Activated naive CD4-positive, alpha-beta T cell treated with anti-CD3 and anti-CD28 coated beads for 36 hours (primary cell): ENCODE measurements at regions of chr1 and their contacts with region 1.

Region 1: DNA sequence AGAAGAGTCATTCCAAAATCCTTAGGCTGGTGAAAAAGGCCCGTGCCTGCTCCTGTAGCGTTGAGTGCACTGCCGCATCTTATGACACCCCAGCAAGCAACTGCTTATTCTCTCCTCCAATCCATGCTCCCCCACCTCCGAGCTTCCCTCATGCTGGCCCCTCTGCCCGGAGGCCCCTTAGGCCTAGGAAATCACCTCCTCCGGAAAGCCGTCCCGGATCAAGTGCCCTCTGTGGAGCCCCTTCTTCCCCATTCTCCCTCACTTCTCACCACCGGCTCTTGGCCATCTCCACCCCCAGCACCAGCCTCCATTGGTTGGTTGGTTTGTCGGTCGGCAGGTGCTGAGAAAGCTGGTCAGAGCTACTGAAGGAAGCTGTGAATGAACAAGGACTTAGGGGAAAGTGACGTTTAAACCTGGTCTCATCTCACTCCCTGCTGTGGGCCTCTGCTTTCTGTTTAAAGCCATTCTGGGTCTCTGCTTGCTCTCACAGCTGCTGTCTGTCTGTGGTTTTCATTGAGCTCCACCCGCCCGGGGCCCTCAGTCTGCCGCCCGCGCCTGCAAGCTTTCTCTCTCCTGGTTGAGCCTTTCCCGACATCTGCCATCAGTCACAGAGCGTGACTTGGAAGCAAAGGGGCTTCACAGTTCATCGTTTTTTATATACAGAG is 122.2 kb downstream of the KCNN3 start:
- DNase-seq: peak; percentile 80
- H3K4me3 Mint-ChIP-seq: peak overlapping the region; percentile 80
- H3K27ac Mint-ChIP-seq: peak overlapping the region; percentile 96
- H3K4me1 Mint-ChIP-seq: peaks cover 80% of the 10 kb centered on the region
- H3K27me3 Mint-ChIP-seq: no peaks in the 10 kb centered on the region

Region 2: DNA sequence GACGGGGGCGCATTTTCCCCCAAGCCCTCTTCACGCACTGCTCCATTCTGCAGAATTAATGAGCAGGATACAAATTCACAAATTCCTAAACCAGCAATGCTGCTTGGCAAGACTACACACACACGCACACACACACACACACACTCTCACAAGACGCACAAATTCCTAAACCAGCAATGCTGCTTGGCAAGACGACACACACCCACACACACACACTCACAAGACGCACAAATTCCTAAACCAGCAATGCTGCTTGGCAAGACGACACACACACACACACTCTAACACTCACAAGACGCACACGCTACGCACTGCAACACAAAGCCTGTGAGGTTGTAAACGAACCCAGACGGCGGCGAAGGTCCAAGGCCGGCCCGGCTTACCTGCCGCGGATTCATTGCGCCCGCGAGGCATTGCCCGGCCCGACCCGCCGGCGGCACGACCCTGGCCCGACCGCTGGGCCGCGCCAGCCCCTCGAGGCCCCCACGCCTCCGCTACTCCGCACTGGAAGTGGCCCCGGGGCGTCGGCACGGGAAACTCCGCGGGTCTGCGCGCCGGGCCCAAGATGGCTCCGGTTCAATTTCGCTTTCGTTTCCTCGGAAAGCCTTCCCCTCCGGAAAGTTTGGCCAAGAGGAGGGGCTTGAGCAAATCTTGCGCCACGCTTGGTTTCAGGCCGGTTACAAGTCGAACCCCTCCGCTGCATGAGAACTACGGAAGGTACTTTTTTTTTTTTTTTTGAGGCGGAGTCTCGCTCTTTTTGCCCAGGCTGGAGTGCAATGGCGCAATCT is 140.1 kb before region 1 on chr1 and contains the start of gene ADAR:
- CTCF ChIA-PET with region 1: interaction called, 3 read pairs
- intact Hi-C with region 1: loop called (anchors 2 kb)
- DNase-seq: peak; percentile 97
- H3K4me3 Mint-ChIP-seq: peak within 1 kb of the TSS; percentile 91
- H3K27ac Mint-ChIP-seq: peak within 1 kb of the TSS; percentile 96
- H3K4me1 Mint-ChIP-seq: peaks cover 75% of the 10 kb centered on the region
- H3K27me3 Mint-ChIP-seq: no peaks in the 10 kb centered on the region
- total RNA-seq, gene ADAR: 301 to 313 TPM

Region 3: DNA sequence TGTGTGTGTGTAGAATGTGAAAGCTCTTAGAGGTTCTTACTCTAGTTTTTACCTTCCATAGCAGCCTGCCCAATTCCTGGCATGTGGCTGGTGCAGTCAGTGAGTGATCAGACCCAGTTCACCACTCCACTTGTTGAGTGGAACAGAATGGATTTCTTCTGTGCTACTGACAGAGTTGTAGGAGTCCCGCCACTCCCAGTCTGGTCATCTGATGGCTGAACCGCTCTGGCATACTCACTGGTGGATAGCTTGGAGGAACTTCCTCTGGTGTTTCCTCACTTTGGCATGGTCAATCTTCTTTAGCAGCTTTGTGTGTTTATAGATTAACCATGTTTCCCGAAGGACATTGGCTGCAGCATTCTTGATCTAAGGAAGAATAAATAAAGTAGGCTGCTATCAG is 33.2 kb before region 1 on chr1:
- CTCF ChIA-PET with region 1: interaction called, 6 read pairs
- intact Hi-C with region 1: loop called (anchors 5 kb)
- DNase-seq: no peak
- H3K4me3 Mint-ChIP-seq: no peak overlapping the region
- H3K27ac Mint-ChIP-seq: no peak overlapping the region
- H3K4me1 Mint-ChIP-seq: peaks cover 7% of the 10 kb centered on the region
- H3K27me3 Mint-ChIP-seq: no peaks in the 10 kb centered on the region

Region 4: DNA sequence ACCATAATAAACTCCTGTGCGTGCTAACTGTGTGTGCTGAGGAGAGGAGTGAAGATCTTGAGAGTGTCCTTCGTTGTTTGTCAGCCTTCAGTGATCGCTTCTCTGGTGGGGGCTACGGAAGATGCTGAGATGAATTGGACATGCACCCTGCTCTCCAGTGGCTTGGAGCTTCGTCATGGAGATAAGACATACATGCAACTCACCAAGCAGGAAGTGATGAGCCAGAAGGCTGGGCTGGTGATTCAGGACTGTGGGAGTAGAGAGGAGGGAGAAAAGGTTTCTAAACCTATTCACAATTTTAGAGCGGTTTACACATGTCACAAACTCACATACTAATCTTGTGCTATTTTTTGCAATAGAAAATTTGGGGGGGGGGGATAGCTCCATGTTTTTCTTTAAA is 11.0 kb before region 1 on chr1:
- CTCF ChIA-PET with region 1: interaction called, 19 read pairs
- intact Hi-C with region 1: no loop called
- DNase-seq: peak; percentile 77
- H3K4me3 Mint-ChIP-seq: no peak overlapping the region
- H3K27ac Mint-ChIP-seq: peak overlapping the region; percentile 72
- H3K4me1 Mint-ChIP-seq: peaks cover 45% of the 10 kb centered on the region
- H3K27me3 Mint-ChIP-seq: no peaks in the 10 kb centered on the region

Region 5: DNA sequence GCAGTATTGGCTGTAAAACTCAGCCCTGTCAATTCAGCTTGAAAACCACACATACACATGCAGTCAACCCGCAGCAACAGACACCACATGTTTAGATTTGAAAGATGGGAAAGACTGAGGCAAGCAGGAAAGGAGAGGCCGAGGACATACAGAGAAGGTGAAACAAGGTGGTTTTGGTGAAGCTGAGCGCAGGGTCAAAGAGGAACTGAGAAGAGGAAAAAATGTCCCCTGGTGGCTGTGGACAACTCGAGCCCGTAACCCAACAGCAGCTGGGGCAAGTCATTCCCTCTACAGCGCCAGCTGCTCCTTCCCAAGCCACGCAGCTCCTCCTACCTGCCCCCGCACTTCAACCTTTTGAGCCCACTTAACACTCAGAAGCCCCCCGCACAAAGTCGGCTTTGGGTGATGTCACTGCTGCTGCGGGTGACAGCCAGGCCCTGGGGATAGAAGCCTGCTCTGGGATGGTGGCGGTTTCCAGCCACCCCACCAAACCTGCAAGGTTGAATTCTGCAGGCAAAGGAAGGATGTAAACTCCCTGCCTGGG is 59.2 kb after region 1 on chr1:
- CTCF ChIA-PET with region 1: no interaction called
- intact Hi-C with region 1: no loop called
- DNase-seq: no peak
- H3K4me3 Mint-ChIP-seq: no peak overlapping the region
- H3K27ac Mint-ChIP-seq: no peak overlapping the region
- H3K4me1 Mint-ChIP-seq: peaks cover 16% of the 10 kb centered on the region
- H3K27me3 Mint-ChIP-seq: peaks cover 6% of the 10 kb centered on the region

Region 6: DNA sequence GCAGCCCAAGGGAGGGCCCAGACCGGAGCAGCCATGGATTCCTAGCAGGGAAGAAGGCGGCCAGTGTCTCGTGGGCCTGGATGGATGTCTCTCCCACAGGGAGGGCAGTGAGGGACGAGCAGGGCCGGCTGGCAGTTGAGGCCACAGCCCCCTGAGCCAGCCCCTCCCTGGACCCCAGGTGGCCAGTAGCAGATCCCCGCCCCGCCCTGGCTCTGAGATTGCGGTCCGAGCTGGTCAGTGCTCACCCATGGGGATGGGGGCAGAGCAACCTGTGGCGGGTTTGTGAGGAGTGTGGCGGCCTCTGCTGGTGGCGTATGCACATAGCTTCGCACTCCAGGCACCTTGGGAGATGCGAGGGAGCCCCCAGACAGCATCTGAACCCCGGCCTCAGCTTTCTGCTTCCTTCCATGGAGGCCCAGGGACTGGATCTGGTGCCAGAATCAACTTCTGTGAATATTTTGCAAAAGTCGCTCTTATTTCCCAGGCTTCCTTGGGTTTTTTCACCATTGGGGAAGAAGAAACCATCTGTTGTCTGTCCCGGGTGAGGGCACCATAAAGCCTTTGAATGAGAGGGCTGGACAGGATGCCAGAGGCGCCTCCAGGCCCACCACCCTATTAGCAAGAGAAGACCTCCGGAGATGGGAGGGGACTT is 130.6 kb after region 1 on chr1:
- CTCF ChIA-PET with region 1: interaction called, 4 read pairs
- intact Hi-C with region 1: loop called (anchors 1 kb)
- DNase-seq: peak; percentile 84
- H3K4me3 Mint-ChIP-seq: no peak overlapping the region
- H3K27ac Mint-ChIP-seq: no peak overlapping the region
- H3K4me1 Mint-ChIP-seq: peaks cover 10% of the 10 kb centered on the region
- H3K27me3 Mint-ChIP-seq: no peaks in the 10 kb centered on the region